ENCODE measurements at regions of chr1 and their contacts with region 1.

Region 1: GRCh38 chr1:2506007-2506860 is 20.2 kb downstream of the PANK4 start:
- DNase-seq: no peak
- H3K4me3 ChIP-seq: no peak overlapping the region
- H3K27ac ChIP-seq: no peak overlapping the region
- H3K4me1 ChIP-seq: no peaks in the 10 kb centered on the region
- H3K27me3 ChIP-seq: no peaks in the 10 kb centered on the region
- CTCF ChIP-seq: no peak

Region 2: DNA sequence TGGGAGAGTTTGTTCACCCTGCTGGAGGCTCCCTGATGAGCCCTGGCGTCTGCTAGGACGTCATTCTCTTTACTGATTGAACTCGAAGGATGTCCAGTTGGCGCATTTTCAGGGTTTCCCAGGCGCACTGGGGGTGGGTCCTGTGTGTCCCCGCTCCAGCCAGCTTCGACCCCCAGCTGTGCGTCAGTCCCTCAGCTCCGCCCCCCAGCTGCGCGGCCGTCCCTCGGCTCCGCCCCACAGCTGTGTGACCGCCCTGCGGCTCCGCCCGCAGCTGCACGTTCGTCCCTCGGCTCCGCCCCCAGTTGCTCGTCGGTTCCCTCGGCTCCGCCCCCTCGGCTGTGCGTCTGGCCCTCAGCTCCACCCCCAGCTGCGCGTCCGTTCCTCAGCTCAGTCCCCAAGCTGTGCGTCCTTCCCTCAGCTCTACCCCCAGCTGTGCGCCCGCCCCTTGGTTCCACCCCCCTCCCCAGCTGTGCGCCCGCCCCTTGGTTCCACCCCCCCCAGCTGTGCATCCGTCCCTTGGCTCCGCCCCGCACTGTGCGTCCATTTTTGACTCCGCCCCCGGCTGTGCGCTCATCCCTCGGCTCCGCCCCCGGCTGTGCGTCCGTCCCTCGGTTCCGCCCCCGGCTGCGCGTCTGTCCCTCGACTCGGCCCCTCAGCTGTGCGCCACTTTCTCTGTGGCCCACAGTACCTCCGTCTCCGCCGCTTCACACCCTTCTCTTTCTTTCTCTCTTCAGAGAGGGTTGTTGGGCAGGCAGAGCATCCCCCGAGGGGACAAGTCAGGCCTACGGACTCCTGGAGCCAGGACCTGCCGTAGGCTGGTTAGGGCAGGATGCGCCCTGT is 373.0 kb before region 1 on chr1:
- CTCF ChIA-PET with region 1: no interaction called
- dilution Hi-C with region 1: no loop called
- in situ Hi-C with region 1: no loop called
- intact Hi-C with region 1: no loop called
- DNase-seq: peak; percentile 89
- H3K4me3 ChIP-seq: peak overlapping the region; percentile 17 to 60 (median 45)
- H3K27ac ChIP-seq: peak overlapping the region; percentile 90
- H3K4me1 ChIP-seq: peaks cover 42% of the 10 kb centered on the region
- H3K27me3 ChIP-seq: no peaks in the 10 kb centered on the region
- CTCF ChIP-seq: no peak

Region 3: GRCh38 chr1:2412519-2413233 is 93.6 kb before region 1 on chr1 and contains the start of gene PEX10:
- CTCF ChIA-PET with region 1: no interaction called
- dilution Hi-C with region 1: no loop called
- in situ Hi-C with region 1: no loop called
- intact Hi-C with region 1: loop called (anchors 5 kb)
- DNase-seq: peak; percentile 93
- H3K4me3 ChIP-seq: peak within 1 kb of the TSS; percentile 70 to 97 (median 95)
- H3K27ac ChIP-seq: peak within 1 kb of the TSS; percentile 72
- H3K4me1 ChIP-seq: peaks cover 31% of the 10 kb centered on the region
- H3K27me3 ChIP-seq: no peaks in the 10 kb centered on the region
- CTCF ChIP-seq: no peak
- total RNA-seq, gene PEX10: 29.5 to 32.8 TPM